Transverse colon (tissue), 4 donors: ENCODE measurements at regions of chr12 and their contacts with region 1.

Region 1: GRCh38 chr12:115155665-115156645 is 472.0 kb upstream of the TBX3 start:
- DNase-seq: no peak
- H3K4me3 ChIP-seq: no peak overlapping the region
- H3K27ac ChIP-seq: no peak overlapping the region
- H3K4me1 ChIP-seq: no peaks in the 10 kb centered on the region
- H3K27me3 ChIP-seq: no peaks in the 10 kb centered on the region
- CTCF ChIP-seq: no peak
- EP300 ChIP-seq: no peak
- POLR2A ChIP-seq: no peak

Region 2: GRCh38 chr12:115103884-115104883 is 51.8 kb before region 1 on chr12:
- in situ Hi-C with region 1: no loop called
- intact Hi-C with region 1: loop called (anchors 2 kb)
- DNase-seq: no peak
- H3K4me3 ChIP-seq: no peak overlapping the region
- H3K27ac ChIP-seq: no peak overlapping the region
- H3K4me1 ChIP-seq: no peaks in the 10 kb centered on the region
- H3K27me3 ChIP-seq: no peaks in the 10 kb centered on the region
- CTCF ChIP-seq: no peak
- EP300 ChIP-seq: no peak
- POLR2A ChIP-seq: no peak